Caco-2 (cell line): ENCODE measurements at regions of chr1 and their contacts with region 1.

Region 1: GRCh38 chr1:216310776-216311175 is 112.5 kb downstream of the USH2A start:
- DNase-seq: peak; percentile 47 to 51
- H3K4me3 ChIP-seq: no peak overlapping the region
- H3K4me3 Mint-ChIP-seq: no peak overlapping the region
- H3K27ac Mint-ChIP-seq: no peak overlapping the region
- H3K4me1 ChIP-seq: 0 out of 2 replicates have a peak, but pooled peaks cover 4% of the 10 kb centered on the region
- H3K4me1 Mint-ChIP-seq: peaks cover 17% of the 10 kb centered on the region
- H3K27me3 ChIP-seq: no peaks in the 10 kb centered on the region
- H3K27me3 Mint-ChIP-seq: no peaks in the 10 kb centered on the region
- CTCF ChIP-seq: peak; percentile 41 to 61

Region 2: GRCh38 chr1:216346526-216346925 is 35.8 kb after region 1 on chr1:
- CTCF ChIA-PET with region 1: no interaction called
- POLR2A ChIA-PET with region 1: no interaction called
- intact Hi-C with region 1: no loop called
- DNase-seq: no peak
- H3K4me3 ChIP-seq: no peak overlapping the region
- H3K4me3 Mint-ChIP-seq: no peak overlapping the region
- H3K27ac Mint-ChIP-seq: no peak overlapping the region
- H3K4me1 ChIP-seq: peaks cover 45% of the 10 kb centered on the region
- H3K4me1 Mint-ChIP-seq: peaks cover 10% of the 10 kb centered on the region
- H3K27me3 ChIP-seq: no peaks in the 10 kb centered on the region
- H3K27me3 Mint-ChIP-seq: no peaks in the 10 kb centered on the region
- CTCF ChIP-seq: no peak

Region 3: GRCh38 chr1:216464489-216464888 is 153.7 kb after region 1 on chr1:
- CTCF ChIA-PET with region 1: no interaction called
- POLR2A ChIA-PET with region 1: no interaction called
- intact Hi-C with region 1: loop called (anchors 5 kb)
- DNase-seq: no peak
- H3K4me3 ChIP-seq: no peak overlapping the region
- H3K4me3 Mint-ChIP-seq: no peak overlapping the region
- H3K27ac Mint-ChIP-seq: no peak overlapping the region
- H3K4me1 ChIP-seq: peaks cover 71% of the 10 kb centered on the region
- H3K4me1 Mint-ChIP-seq: peaks cover 47% of the 10 kb centered on the region
- H3K27me3 ChIP-seq: no peaks in the 10 kb centered on the region
- H3K27me3 Mint-ChIP-seq: no peaks in the 10 kb centered on the region
- CTCF ChIP-seq: no peak

Region 4: DNA sequence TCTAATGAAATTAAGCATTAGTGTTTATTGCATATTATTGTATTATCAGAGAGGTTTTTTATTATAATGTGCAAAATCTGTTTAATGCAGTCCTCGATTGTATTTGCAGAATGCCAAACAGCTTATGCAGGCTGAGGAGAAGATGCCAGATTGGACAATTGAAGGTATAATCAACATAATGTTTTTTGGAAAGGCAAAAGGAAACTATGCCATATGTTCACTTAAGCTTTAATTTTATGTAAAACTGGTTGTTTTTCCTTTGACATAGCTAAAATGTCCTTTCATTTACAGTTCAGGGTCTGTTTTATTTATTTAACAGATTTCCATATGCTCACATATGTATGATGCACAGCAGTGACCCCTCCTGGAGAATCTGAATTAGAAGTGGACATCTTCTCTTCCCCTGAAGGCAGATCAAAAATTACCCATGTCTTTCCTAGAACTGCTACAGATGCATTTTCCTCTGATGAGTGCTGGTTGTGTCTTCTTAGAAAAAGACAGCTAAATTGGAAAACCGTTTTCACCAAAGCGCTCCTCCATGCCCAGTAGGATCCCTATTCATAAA is 255.9 kb after region 1 on chr1:
- CTCF ChIA-PET with region 1: no interaction called
- POLR2A ChIA-PET with region 1: no interaction called
- intact Hi-C with region 1: loop called (anchors 1 kb)
- DNase-seq: peak in 1 of 2 experiments; percentile 14
- H3K4me3 ChIP-seq: no peak overlapping the region
- H3K4me3 Mint-ChIP-seq: no peak overlapping the region
- H3K27ac Mint-ChIP-seq: no peak overlapping the region
- H3K4me1 ChIP-seq: no peaks in the 10 kb centered on the region
- H3K4me1 Mint-ChIP-seq: no peaks in the 10 kb centered on the region
- H3K27me3 ChIP-seq: no peaks in the 10 kb centered on the region
- H3K27me3 Mint-ChIP-seq: no peaks in the 10 kb centered on the region
- CTCF ChIP-seq: peak; percentile 39 to 42

Region 5: DNA sequence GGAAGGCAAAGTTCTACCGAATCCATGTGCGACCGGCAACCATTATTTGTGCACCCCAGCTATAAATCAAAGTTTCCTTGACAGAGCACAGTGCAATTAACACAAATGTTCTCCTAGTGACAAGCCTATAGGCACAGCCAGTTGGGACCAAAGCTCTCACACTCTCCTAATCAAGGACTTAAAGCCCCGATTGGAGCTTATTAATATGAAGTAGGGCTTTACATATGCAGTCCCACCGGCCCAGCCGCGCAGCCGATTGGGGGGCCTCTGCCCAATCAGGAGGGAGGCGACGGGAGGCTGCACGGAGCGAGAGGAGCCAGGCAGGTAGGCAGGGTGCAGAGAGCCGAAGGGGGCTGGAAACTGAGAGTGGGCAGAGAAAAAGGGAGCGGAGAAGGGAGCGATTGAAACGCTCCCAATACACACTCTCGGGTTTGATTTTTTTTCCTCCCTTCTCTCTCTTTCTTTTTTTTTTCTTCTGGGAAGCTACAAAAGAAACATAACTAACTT is 412.6 kb after region 1 on chr1 and contains the start of gene ESRRG:
- CTCF ChIA-PET with region 1: interaction called, 5 read pairs
- POLR2A ChIA-PET with region 1: no interaction called
- intact Hi-C with region 1: loop called (anchors 5 kb)
- DNase-seq: peak; percentile 77 to 82
- H3K4me3 ChIP-seq: peak within 1 kb of the TSS; percentile 48
- H3K4me3 Mint-ChIP-seq: peak within 1 kb of the TSS; percentile 99
- H3K27ac Mint-ChIP-seq: peak within 1 kb of the TSS; percentile 86
- H3K4me1 ChIP-seq: 0 out of 2 replicates have a peak, but pooled peaks cover 4% of the 10 kb centered on the region
- H3K4me1 Mint-ChIP-seq: peaks cover 15% of the 10 kb centered on the region
- H3K27me3 ChIP-seq: no peaks in the 10 kb centered on the region
- H3K27me3 Mint-ChIP-seq: no peaks in the 10 kb centered on the region
- CTCF ChIP-seq: no peak
- total RNA-seq, gene ESRRG: 6.6 and 8.6 TPM in 2 replicates

Region 6: DNA sequence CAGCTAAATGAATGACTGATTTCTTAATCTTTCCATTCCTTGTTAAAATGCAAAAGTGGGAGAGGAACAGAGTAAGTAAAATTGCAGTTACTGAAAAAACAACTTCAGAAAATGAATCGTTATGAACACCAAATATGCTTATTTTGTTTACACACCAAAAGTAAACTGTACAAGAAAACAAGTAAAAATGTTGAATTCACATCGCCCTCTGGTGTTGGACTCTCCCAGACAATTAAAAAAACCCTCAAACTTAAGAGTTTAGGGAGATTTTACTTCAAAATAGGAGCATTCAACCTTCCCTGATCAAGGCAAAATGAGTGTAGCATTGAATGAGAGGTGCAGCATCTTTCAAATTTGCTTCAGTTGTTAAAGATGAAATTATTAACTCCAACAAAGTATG is 431.8 kb after region 1 on chr1:
- CTCF ChIA-PET with region 1: no interaction called
- POLR2A ChIA-PET with region 1: no interaction called
- intact Hi-C with region 1: loop called (anchors 1 kb)
- DNase-seq: no peak
- H3K4me3 ChIP-seq: no peak overlapping the region
- H3K4me3 Mint-ChIP-seq: no peak overlapping the region
- H3K27ac Mint-ChIP-seq: no peak overlapping the region
- H3K4me1 ChIP-seq: no peaks in the 10 kb centered on the region
- H3K4me1 Mint-ChIP-seq: no peaks in the 10 kb centered on the region
- H3K27me3 ChIP-seq: no peaks in the 10 kb centered on the region
- H3K27me3 Mint-ChIP-seq: no peaks in the 10 kb centered on the region
- CTCF ChIP-seq: peak in 1 of 2 experiments; percentile 50